ENCODE measurements at regions of chr21 and their contacts with region 1.

Region 1: DNA sequence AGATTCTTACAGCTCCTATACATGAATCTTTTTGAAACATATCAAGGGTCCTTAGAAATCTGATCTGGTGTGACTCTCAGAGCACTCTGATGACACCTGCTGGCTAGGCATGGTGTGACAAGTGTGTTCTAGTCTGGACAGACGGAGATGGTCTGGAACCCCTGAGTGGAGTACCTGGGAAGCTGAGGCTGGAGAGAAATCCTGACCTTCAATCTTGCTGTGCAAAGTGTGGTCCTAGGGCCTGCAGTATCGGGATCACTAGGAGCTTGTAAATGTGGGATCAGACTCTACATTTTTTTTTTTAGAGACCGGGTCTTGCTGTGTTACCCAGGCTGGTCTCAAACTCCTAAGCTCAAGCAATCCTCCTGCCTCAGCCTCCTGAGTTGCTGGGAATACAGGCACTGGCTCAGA is 78.6 kb upstream of the SOD1 start:
- DNase-seq: peak; percentile 44 to 56
- H3K4me3 ChIP-seq: no peak overlapping the region
- H3K27ac ChIP-seq: no peak overlapping the region
- H3K4me1 ChIP-seq: no peaks in the 10 kb centered on the region
- H3K27me3 ChIP-seq: no peaks in the 10 kb centered on the region
- CTCF ChIP-seq: peak; percentile 85

Region 2: DNA sequence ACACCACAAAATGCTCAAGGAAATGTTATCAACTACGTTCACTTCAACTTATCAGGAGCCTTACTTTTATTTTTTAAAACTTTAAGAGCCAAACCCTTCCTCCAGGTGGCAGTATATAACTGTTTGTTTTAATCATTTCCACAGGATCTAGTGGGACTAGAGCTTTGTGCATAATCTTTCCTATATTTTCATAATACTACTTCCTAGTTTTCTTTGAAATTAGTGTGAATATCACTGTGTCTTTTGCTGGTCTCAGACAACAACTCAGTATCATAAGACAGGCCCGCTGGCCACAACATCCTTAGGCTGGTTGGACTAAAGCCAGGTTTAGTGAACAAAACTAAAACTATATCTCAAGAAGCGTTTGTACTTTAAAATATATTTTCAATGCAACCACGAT is 382.3 kb before region 1 on chr21:
- CTCF ChIA-PET with region 1: interaction called, 12 read pairs
- POLR2A ChIA-PET with region 1: no interaction called
- intact Hi-C with region 1: loop called (anchors 1 kb)
- DNase-seq: peak in 1 of 2 experiments; percentile 48
- H3K4me3 ChIP-seq: no peak overlapping the region
- H3K27ac ChIP-seq: no peak overlapping the region
- H3K4me1 ChIP-seq: no peaks in the 10 kb centered on the region
- H3K27me3 ChIP-seq: no peaks in the 10 kb centered on the region
- CTCF ChIP-seq: peak; percentile 77

Region 3: GRCh38 chr21:31218830-31219608 is 361.9 kb before region 1 on chr21:
- CTCF ChIA-PET with region 1: no interaction called
- POLR2A ChIA-PET with region 1: no interaction called
- intact Hi-C with region 1: loop called (anchors 5 kb)
- DNase-seq: peak; percentile 69 to 89
- H3K4me3 ChIP-seq: peak overlapping the region; percentile 6; the same call in 1 of the 2 replicates
- H3K27ac ChIP-seq: peak overlapping the region; percentile 82
- H3K4me1 ChIP-seq: peaks cover 24% of the 10 kb centered on the region
- H3K27me3 ChIP-seq: no peaks in the 10 kb centered on the region
- CTCF ChIP-seq: no peak

Region 4: DNA sequence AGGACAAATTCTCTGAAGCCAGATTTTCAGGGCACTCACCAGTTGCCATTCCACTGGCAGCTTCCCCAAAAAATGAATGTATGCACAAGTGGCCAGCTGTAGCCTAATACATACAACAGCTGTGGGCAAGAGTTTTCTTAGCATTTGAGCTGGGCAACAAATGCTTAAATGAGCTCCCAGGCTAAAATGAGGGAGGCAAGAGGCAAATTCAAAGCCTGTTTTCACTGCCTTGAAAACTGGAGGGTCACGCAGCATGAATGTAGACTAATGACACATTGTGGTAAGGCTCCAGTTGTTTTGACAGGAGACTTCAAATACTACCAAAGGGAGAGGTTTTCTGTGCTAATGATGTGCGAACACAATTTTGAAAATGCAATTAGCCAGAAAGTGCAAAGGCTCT is 325.0 kb before region 1 on chr21:
- CTCF ChIA-PET with region 1: interaction called, 5 read pairs
- POLR2A ChIA-PET with region 1: interaction called, 15 read pairs
- intact Hi-C with region 1: no loop called
- DNase-seq: no peak
- H3K4me3 ChIP-seq: no peak overlapping the region
- H3K27ac ChIP-seq: no peak overlapping the region
- H3K4me1 ChIP-seq: peaks cover 4% of the 10 kb centered on the region
- H3K27me3 ChIP-seq: no peaks in the 10 kb centered on the region
- CTCF ChIP-seq: no peak

Region 5: GRCh38 chr21:31457675-31458074 is 123.2 kb before region 1 on chr21:
- CTCF ChIA-PET with region 1: no interaction called
- POLR2A ChIA-PET with region 1: no interaction called
- intact Hi-C with region 1: loop called (anchors 1 kb)
- DNase-seq: no peak
- H3K4me3 ChIP-seq: no peak overlapping the region
- H3K27ac ChIP-seq: no peak overlapping the region
- H3K4me1 ChIP-seq: no peaks in the 10 kb centered on the region
- H3K27me3 ChIP-seq: no peaks in the 10 kb centered on the region
- CTCF ChIP-seq: peak; percentile 14; the same call in 1 of the 2 replicates